ENCODE measurements at regions of chr10 and their contacts with region 1.

Region 1: DNA sequence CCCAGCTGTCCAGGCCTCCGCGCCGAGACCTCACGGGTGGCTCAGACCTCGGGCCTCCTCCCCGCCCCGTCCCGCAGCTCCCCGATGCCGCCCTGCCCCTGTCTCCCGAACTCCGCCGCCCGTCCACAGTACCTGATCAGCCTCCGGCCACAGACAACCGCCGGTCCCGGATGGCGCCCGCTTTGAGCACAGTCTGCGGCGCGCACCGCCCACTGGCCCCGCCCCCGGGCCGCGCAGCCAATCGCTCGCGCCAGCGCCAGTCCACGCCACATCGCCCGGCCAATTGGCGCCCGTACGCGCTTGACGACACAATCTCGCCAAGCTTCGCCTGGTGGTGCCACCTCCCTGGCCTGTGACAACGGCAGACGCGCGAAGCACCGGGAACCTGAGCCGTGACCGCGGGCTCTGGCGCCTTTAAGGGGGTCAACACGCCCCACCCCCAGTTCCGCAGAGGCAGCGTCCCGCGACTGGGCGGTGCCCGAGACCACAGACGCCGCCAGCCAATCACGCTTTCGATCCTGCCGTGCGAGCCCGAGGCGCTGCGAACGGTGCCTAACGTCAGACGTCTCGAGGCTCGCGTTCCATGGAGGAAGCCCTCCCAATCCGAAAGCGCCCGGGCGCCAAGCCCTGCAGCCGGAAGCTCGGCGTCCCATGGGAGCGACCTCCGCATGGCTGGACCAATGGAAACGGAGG is at the start of gene IDI1:
- DNase-seq: peak; percentile 90 to 99 (median 95)
- ATAC-seq: peak; percentile 72
- H3K4me3 ChIP-seq: peak within 1 kb of the TSS; percentile 91
- H3K4me3 Mint-ChIP-seq: peak within 1 kb of the TSS; percentile 98
- H3K27ac ChIP-seq: peak within 1 kb of the TSS; percentile 96 to 100
- H3K27ac Mint-ChIP-seq: peak within 1 kb of the TSS; percentile 98
- H3K4me1 ChIP-seq: peaks cover 49% of the 10 kb centered on the region
- H3K4me1 Mint-ChIP-seq: peaks cover 90% of the 10 kb centered on the region
- H3K27me3 ChIP-seq: no peaks in the 10 kb centered on the region
- H3K27me3 Mint-ChIP-seq: peaks cover 5% of the 10 kb centered on the region
- CTCF ChIP-seq: no peak
- total RNA-seq, gene IDI1: 244 to 250 TPM

Region 2: GRCh38 chr10:154348-154747 is 894.5 kb before region 1 on chr10:
- CTCF ChIA-PET with region 1: no interaction called
- POLR2A ChIA-PET with region 1: no interaction called
- intact Hi-C with region 1: no loop called
- DNase-seq: no peak
- ATAC-seq: no peak
- H3K4me3 ChIP-seq: no peak overlapping the region
- H3K4me3 Mint-ChIP-seq: no peak overlapping the region
- H3K27ac ChIP-seq: no peak overlapping the region
- H3K27ac Mint-ChIP-seq: no peak overlapping the region
- H3K4me1 ChIP-seq: no peaks in the 10 kb centered on the region
- H3K4me1 Mint-ChIP-seq: peaks cover 51% of the 10 kb centered on the region
- H3K27me3 ChIP-seq: no peaks in the 10 kb centered on the region
- H3K27me3 Mint-ChIP-seq: no peaks in the 10 kb centered on the region
- CTCF ChIP-seq: no peak

Region 3: GRCh38 chr10:931416-932318 is 117.2 kb before region 1 on chr10 and contains the start of gene LARP4B:
- CTCF ChIA-PET with region 1: interaction called, 4 read pairs
- POLR2A ChIA-PET with region 1: interaction called, 31 read pairs
- intact Hi-C with region 1: loop called in 1 of 2 experiments (anchors 1 kb)
- DNase-seq: peak; percentile 92 to 99 (median 96)
- ATAC-seq: peak; percentile 97
- H3K4me3 ChIP-seq: peak within 1 kb of the TSS; percentile 64
- H3K4me3 Mint-ChIP-seq: peak within 1 kb of the TSS; percentile 98
- H3K27ac ChIP-seq: peak within 1 kb of the TSS; percentile 50 to 89
- H3K27ac Mint-ChIP-seq: peak within 1 kb of the TSS; percentile 89
- H3K4me1 ChIP-seq: peaks cover 27% of the 10 kb centered on the region
- H3K4me1 Mint-ChIP-seq: peaks cover 48% of the 10 kb centered on the region
- H3K27me3 ChIP-seq: no peaks in the 10 kb centered on the region
- H3K27me3 Mint-ChIP-seq: no peaks in the 10 kb centered on the region
- CTCF ChIP-seq: no peak
- total RNA-seq, gene LARP4B: 33.1 to 40.2 TPM

Region 4: GRCh38 chr10:970311-971149 is 78.3 kb before region 1 on chr10:
- CTCF ChIA-PET with region 1: no interaction called
- POLR2A ChIA-PET with region 1: no interaction called
- intact Hi-C with region 1: no loop called
- DNase-seq: no peak
- ATAC-seq: no peak
- H3K4me3 ChIP-seq: no peak overlapping the region
- H3K4me3 Mint-ChIP-seq: no peak overlapping the region
- H3K27ac ChIP-seq: no peak overlapping the region
- H3K27ac Mint-ChIP-seq: no peak overlapping the region
- H3K4me1 ChIP-seq: peaks cover 10% of the 10 kb centered on the region
- H3K4me1 Mint-ChIP-seq: peaks cover 11% of the 10 kb centered on the region
- H3K27me3 ChIP-seq: no peaks in the 10 kb centered on the region
- H3K27me3 Mint-ChIP-seq: peaks cover 17% of the 10 kb centered on the region
- CTCF ChIP-seq: no peak

Region 5: GRCh38 chr10:1061930-1062774 is 13.3 kb after region 1 on chr10:
- CTCF ChIA-PET with region 1: interaction called, 5 read pairs
- POLR2A ChIA-PET with region 1: interaction called, 51 read pairs
- intact Hi-C with region 1: loop called in 1 of 2 experiments (anchors 1 kb)
- DNase-seq: peak in 1 of 14 experiments; percentile 41
- ATAC-seq: no peak
- H3K4me3 ChIP-seq: peak overlapping the region; percentile 21
- H3K4me3 Mint-ChIP-seq: peak overlapping the region; percentile 81
- H3K27ac ChIP-seq: peak overlapping the region; percentile 55 to 65
- H3K27ac Mint-ChIP-seq: peak overlapping the region; percentile 98
- H3K4me1 ChIP-seq: peaks cover 63% of the 10 kb centered on the region
- H3K4me1 Mint-ChIP-seq: peaks cover 92% of the 10 kb centered on the region
- H3K27me3 ChIP-seq: no peaks in the 10 kb centered on the region
- H3K27me3 Mint-ChIP-seq: no peaks in the 10 kb centered on the region
- CTCF ChIP-seq: no peak

Region 6: DNA sequence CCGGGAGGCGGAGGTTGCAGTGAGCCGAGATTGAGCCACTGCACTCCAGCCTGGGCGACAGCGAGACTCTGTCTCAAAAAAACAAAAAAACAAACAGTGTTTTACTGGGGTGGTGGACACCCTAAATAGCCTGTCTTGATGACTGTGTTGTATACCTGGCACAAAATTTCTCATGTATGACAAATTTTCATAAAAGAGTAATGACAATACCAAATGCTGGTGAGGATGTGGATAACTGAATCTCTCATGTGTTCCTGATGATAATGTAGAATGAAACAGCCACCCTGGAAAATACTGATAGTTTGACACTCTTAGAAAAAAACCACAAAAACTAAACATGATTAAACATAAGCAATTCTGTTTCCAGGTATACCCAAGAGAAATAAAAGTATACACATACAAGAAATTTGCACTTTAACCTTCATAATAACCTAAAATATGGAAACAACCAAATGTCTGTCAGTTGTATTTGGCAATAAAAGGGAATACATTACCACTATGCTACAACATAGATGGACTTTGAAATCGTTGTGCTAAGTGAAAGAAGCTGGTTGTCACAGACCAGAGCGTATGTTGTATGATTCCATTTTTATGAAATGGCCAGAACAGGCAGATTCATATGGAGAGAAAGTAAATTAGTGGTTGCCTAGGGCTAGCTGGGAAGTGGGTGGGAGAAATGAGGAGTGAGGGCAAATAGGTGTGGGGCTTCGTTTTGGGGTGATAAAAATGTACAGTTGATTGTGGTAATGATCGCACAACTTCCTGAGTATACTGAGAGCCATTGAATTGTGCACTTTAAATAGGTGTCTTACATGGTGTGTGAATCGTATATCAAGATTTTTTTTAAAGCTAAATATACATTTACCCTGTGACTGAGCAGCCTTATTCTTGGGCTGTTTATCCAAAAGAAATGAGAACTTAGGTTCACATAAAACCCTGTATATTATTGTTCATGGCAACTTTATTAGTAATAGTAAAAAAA is 19.8 kb after region 1 on chr10:
- CTCF ChIA-PET with region 1: interaction called, 5 read pairs
- POLR2A ChIA-PET with region 1: interaction called, 51 read pairs
- intact Hi-C with region 1: loop called in 1 of 2 experiments (anchors 2 kb)
- DNase-seq: peak in 1 of 14 experiments; percentile 31
- ATAC-seq: no peak
- H3K4me3 ChIP-seq: no peak overlapping the region
- H3K4me3 Mint-ChIP-seq: no peak overlapping the region
- H3K27ac ChIP-seq: no peak overlapping the region
- H3K27ac Mint-ChIP-seq: peak overlapping the region; percentile 8
- H3K4me1 ChIP-seq: peaks cover 11% of the 10 kb centered on the region
- H3K4me1 Mint-ChIP-seq: peaks cover 65% of the 10 kb centered on the region
- H3K27me3 ChIP-seq: no peaks in the 10 kb centered on the region
- H3K27me3 Mint-ChIP-seq: no peaks in the 10 kb centered on the region
- CTCF ChIP-seq: no peak

Region 7: DNA sequence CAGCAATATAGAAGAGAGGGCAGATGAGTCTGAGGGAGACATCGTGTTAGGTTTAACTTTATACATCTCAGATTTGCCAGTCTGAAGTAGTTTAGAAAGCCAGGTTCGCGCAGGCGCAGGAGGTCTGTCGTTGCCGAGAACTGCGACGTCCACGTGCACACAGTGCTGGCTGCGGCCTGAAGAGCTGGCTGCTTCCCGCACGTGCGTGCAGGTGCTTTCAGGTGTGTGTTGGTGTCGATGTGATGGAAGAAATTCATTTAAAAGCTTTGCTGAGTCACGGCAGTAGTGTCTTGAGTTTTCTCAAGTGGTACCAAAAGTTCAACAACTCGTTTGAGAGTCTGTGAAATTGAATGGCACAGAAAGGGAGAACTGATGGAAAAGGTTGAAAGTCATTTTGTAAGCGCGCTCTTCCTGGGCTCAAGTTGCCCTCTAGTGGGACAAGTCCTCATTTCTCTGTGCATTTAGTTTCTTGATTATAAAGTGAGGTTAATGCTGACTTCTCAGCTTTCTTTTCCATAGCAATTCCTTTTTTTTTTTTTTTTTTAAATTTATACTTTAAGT is 25.9 kb after region 1 on chr10:
- CTCF ChIA-PET with region 1: interaction called, 6 read pairs
- POLR2A ChIA-PET with region 1: interaction called, 12 read pairs
- intact Hi-C with region 1: loop called in 1 of 2 experiments (anchors 1 kb)
- DNase-seq: peak in 4 of 14 experiments; percentile 9 to 41 (median 36)
- ATAC-seq: no peak
- H3K4me3 ChIP-seq: no peak overlapping the region
- H3K4me3 Mint-ChIP-seq: no peak overlapping the region
- H3K27ac ChIP-seq: no peak overlapping the region
- H3K27ac Mint-ChIP-seq: peak overlapping the region; percentile 5
- H3K4me1 ChIP-seq: peaks cover 5% of the 10 kb centered on the region
- H3K4me1 Mint-ChIP-seq: peaks cover 21% of the 10 kb centered on the region
- H3K27me3 ChIP-seq: no peaks in the 10 kb centered on the region
- H3K27me3 Mint-ChIP-seq: no peaks in the 10 kb centered on the region
- CTCF ChIP-seq: peak; percentile 18

Region 8: GRCh38 chr10:1142596-1142995 is 93.7 kb after region 1 on chr10:
- CTCF ChIA-PET with region 1: no interaction called
- POLR2A ChIA-PET with region 1: no interaction called
- intact Hi-C with region 1: no loop called
- DNase-seq: peak in 1 of 14 experiments; percentile 17
- ATAC-seq: no peak
- H3K4me3 ChIP-seq: no peak overlapping the region
- H3K4me3 Mint-ChIP-seq: no peak overlapping the region
- H3K27ac ChIP-seq: no peak overlapping the region
- H3K27ac Mint-ChIP-seq: no peak overlapping the region
- H3K4me1 ChIP-seq: no peaks in the 10 kb centered on the region
- H3K4me1 Mint-ChIP-seq: no peaks in the 10 kb centered on the region
- H3K27me3 ChIP-seq: peaks cover 0 to 2% of the 10 kb centered on the region in 2 experiments
- H3K27me3 Mint-ChIP-seq: peaks cover 14% of the 10 kb centered on the region
- CTCF ChIP-seq: no peak

Region 9: DNA sequence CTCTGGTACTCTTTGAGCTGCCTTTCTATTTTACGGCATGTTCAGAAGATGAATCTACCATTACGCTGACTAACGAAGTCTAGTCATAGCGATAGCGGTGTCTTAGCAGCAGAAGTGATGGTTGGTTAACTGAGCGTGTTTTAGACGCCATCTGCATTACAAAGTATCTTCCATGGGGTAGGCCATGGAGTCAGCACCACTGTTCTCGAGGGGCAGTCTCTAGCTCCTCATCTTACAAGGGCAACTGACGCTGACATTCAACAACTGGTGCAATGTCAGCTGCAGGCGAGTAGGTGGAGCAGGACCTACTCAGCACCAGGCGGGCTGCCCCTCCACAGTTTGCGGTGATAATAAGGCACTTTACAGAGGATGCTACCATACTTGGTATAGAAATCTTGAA is 599.8 kb after region 1 on chr10:
- CTCF ChIA-PET with region 1: no interaction called
- POLR2A ChIA-PET with region 1: no interaction called
- intact Hi-C with region 1: no loop called
- DNase-seq: no peak
- ATAC-seq: no peak
- H3K4me3 ChIP-seq: no peak overlapping the region
- H3K4me3 Mint-ChIP-seq: no peak overlapping the region
- H3K27ac ChIP-seq: no peak overlapping the region
- H3K27ac Mint-ChIP-seq: no peak overlapping the region
- H3K4me1 ChIP-seq: no peaks in the 10 kb centered on the region
- H3K4me1 Mint-ChIP-seq: no peaks in the 10 kb centered on the region
- H3K27me3 ChIP-seq: no peaks in the 10 kb centered on the region
- H3K27me3 Mint-ChIP-seq: peaks cover 16% of the 10 kb centered on the region
- CTCF ChIP-seq: no peak